ENCODE measurements at regions of chr10 and their contacts with region 1.

Region 1: GRCh38 chr10:90912174-90912573 is 8.7 kb downstream of the ANKRD1 start:
- DNase-seq: no peak
- ATAC-seq: no peak
- H3K4me3 ChIP-seq: no peak overlapping the region
- H3K27ac ChIP-seq: no peak overlapping the region
- H3K4me1 ChIP-seq: no peaks in the 10 kb centered on the region
- H3K27me3 ChIP-seq: no peaks in the 10 kb centered on the region

Region 2: DNA sequence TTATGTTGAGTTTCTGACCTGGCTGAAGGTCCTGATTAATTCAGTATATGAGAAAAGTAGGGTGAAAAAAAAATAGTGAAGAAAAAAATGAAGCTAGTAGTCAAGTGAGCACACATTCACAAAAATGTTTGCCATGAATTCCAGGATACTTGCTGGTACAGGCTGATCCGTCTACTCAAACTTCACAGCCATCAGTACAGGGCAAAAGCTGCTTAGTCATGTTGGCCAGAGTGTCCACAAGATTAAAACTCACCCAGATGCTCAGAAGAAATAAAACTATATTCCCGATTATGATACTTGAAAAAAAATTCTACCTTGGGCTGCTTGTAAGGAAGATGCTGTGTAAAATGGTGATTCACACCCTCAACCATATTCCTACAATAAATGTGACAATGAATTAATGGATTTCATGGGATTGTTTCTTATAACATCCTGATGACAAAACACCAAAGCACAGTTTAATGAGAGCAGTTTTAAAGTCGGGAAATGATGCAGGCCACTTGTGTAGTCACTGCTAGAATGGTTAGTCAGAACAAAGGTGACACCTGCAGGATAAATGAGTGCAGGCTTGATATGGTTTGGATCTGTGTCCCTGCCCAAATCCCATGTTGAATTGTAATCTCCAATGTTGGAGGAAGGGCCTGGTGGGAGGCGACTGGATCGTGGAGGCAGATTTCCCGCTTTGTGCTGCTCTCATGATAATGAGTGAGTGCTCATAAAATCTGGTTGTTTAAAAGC is 57.9 kb after region 1 on chr10:
- intact Hi-C with region 1: loop called in 1 of 2 experiments (anchors 2 kb)
- DNase-seq: no peak
- ATAC-seq: no peak
- H3K4me3 ChIP-seq: no peak overlapping the region
- H3K27ac ChIP-seq: no peak overlapping the region
- H3K4me1 ChIP-seq: no peaks in the 10 kb centered on the region
- H3K27me3 ChIP-seq: no peaks in the 10 kb centered on the region

Region 3: DNA sequence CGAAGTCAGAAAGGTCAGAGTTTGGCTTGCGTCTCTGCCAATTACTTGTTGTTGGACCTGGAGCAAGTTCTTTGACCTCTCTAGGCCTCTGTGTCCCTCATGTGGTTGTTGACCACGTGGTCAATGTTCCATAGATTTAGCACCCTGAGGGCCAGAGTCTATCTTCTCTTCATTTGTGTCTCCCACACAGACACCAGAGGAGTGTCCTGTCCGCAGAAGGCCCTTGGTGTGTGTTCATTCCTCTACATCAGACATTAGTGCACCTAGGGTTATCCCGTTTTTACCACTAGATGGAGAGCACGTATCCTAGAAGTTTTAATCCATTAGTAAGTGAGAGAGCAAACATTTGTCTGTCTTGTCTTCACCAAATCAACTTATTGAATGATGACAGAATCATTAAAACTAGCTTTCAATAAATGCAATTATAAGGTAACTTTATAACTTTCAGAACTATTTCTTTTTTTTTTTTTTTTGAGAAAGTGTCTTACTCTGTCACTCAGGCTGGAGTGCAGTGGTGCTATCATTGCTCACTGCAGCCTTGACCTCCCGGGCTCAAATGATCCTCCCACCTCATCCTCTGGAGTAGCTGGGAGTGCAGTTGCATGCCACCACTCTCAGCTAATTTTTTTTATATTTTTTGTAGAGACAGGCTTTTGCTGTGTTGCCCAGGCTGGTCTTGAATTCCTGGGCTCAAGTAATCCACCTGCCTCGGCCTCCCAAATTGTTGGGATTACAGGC is 131.2 kb after region 1 on chr10:
- intact Hi-C with region 1: loop called in 1 of 2 experiments (anchors 10 kb)
- DNase-seq: no peak
- ATAC-seq: peak; percentile 13
- H3K4me3 ChIP-seq: no peak overlapping the region
- H3K27ac ChIP-seq: no peak overlapping the region
- H3K4me1 ChIP-seq: peaks cover 0 to 8% of the 10 kb centered on the region in 2 donors
- H3K27me3 ChIP-seq: no peaks in the 10 kb centered on the region